SK-N-SH (cell line): ENCODE measurements at regions of chr2 and their contacts with region 1.

Region 1: GRCh38 chr2:79191081-79191480 is 31.5 kb upstream of the REG3A start:
- DNase-seq: no peak
- H3K4me3 ChIP-seq: no peak overlapping the region
- H3K27ac ChIP-seq: no peak overlapping the region
- H3K4me1 ChIP-seq: no peaks in the 10 kb centered on the region
- H3K27me3 ChIP-seq: no peaks in the 10 kb centered on the region
- CTCF ChIP-seq: no peak
- EP300 ChIP-seq: no peak
- RAD21 ChIP-seq: no peak

Region 2: DNA sequence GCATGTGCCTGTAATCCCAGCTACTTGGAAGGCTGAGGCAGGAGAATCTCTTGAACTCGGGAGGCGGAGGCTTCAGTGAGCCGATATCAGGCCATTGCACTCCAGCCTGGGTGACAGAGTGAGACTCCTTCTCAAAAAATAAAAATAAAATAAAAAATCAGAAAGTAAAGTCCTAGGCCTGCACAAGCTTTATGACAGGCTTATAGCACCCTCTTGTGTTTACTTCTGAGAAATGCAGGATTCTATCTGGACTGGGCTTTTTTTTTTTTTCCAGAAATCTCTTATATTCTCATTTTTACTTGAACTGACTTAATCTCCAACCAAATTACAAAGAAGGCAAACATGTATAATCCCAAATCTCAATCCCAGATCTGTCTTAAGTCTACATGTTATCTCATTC is 191.7 kb before region 1 on chr2:
- CTCF ChIA-PET with region 1: no interaction called
- POLR2A ChIA-PET with region 1: no interaction called
- DNase-seq: peak; percentile 42
- H3K4me3 ChIP-seq: no peak overlapping the region
- H3K27ac ChIP-seq: no peak overlapping the region
- H3K4me1 ChIP-seq: peaks cover 0 to 15% of the 10 kb centered on the region in 2 experiments; a peak in 2 of 4 replicates
- H3K27me3 ChIP-seq: no peaks in the 10 kb centered on the region
- CTCF ChIP-seq: peak; percentile 56
- EP300 ChIP-seq: no peak
- RAD21 ChIP-seq: peak; percentile 70

Region 3: DNA sequence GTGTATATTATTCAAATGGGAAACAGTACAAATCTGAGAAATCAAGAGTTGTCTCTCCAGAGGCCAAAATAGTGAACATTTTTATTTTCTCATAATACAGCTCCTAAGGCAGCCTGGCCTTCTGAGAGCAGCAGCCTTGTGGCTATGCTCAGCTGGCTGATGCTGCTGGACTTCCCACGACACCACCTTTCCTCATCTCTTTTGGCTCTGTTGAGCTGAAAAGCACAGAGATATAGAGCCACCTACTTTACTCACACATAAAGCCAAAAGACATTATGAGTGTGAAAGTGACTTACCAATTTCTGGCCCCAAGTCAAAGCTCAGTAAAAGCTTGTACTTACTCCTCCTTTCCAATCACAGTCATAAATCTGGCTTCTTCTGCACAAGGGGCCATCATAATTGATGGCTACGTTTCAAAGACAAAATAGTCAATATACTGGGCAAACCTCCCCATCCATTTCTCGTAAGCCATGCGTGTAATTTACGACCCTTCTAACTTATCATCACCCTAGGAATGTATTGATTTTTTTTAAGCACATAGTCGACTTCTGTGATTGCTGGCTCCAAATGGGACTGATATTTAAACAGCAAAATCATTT is 12.9 kb before region 1 on chr2:
- CTCF ChIA-PET with region 1: interaction called, 10 read pairs
- POLR2A ChIA-PET with region 1: no interaction called
- DNase-seq: no peak
- H3K4me3 ChIP-seq: no peak overlapping the region
- H3K27ac ChIP-seq: no peak overlapping the region
- H3K4me1 ChIP-seq: no peaks in the 10 kb centered on the region
- H3K27me3 ChIP-seq: no peaks in the 10 kb centered on the region
- CTCF ChIP-seq: no peak
- EP300 ChIP-seq: no peak
- RAD21 ChIP-seq: no peak

Region 4: DNA sequence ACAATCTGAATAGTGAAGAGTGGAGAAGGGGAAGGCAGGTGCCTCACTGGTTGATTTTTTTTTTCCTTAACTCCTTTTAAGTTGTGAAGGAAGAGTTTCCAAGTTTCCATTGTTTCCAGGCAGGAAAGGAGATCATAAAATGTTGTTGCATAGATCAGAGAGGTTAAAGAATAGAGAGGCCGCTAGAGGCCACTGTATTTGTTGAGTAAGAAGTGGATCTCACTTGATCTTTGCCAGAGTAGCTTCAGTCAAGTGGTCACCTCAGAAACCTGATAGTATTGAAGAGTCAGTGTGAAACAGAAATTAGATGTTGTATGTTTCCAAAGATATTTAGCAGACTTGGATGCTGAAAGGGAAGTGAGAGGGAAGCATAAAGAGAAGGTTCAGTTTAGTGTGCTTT is 339.4 kb after region 1 on chr2:
- CTCF ChIA-PET with region 1: no interaction called
- POLR2A ChIA-PET with region 1: no interaction called
- DNase-seq: no peak
- H3K4me3 ChIP-seq: no peak overlapping the region
- H3K27ac ChIP-seq: no peak overlapping the region
- H3K4me1 ChIP-seq: no peaks in the 10 kb centered on the region; a peak in 1 of 4 replicates
- H3K27me3 ChIP-seq: no peaks in the 10 kb centered on the region
- CTCF ChIP-seq: peak; percentile 22; the same call in 1 of the 2 replicates
- EP300 ChIP-seq: no peak
- RAD21 ChIP-seq: peak; percentile 52; the same call in 1 of the 2 replicates